ENCODE measurements at regions of chr6 and their contacts with region 1.

Region 1: DNA sequence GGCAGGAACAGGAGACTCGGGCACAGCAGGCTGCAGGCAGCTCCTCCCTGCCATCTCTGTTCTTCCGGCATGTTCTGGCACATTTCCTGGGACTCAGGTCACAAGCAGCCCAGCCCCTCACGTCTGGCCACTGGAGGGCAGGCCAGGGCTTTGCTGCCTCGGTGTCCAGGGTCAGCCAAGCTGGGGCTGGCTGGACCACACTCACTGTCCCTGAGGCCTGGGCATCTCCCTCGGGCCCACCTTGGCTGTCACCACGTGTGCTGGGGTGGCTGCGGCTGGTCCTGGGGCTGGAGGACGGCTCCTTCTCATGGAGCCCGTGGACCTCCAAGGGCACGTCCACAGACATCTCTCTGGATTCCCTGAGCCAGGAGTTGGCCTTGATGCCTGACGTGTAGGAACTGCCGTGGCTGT is 18.5 kb downstream of the FRMD1 start:
- DNase-seq: peak; percentile 43
- ATAC-seq: peak; percentile 89
- H3K4me3 ChIP-seq: no peak overlapping the region
- H3K27ac ChIP-seq: no peak overlapping the region
- H3K4me1 ChIP-seq: 0 out of 2 replicates have a peak, but pooled peaks cover 1% of the 10 kb centered on the region
- H3K27me3 ChIP-seq: no peaks in the 10 kb centered on the region; the same call in 1 of the 2 replicates
- CTCF ChIP-seq: peak; percentile 45
- POLR2A ChIP-seq: no peak
- RAD21 ChIP-seq: peak; percentile 52

Region 2: DNA sequence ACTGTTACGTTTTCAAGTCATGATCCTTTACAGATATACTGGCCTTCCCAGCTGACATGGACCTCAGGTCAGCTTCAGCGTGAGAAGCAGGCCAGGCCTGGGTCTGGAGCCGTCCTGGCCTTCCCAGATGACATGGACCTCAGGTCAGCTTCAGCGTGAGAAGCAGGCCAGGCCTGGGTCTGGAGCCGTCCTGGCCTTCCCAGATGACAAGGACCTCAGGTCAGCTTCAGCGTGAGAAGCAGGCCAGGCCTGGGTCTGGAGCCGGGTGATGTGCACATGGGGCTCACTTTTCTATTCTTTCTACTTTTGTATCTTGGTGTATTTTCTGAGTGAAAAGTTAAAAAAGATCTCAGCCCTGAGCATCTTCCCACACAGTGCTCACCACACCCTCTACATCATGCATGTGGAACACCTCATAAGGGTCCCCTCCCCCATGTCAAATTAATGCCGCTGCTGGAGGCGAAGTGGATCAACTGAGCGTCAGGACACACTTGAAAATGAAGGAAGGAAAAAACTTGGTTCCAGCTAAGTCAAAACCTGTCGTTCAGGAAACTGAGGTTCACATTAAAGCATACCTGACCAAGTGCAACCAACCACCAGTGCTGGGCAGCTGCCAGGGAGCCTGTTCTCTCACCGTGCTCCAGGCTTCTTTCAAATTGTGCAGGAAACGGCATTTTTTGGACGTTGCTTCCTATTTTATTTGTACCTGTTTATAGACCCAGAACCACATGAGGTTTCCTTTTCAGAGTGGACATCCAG is 30.9 kb before region 1 on chr6:
- CTCF ChIA-PET with region 1: no interaction called
- POLR2A ChIA-PET with region 1: no interaction called
- dilution Hi-C with region 1: no loop called
- in situ Hi-C with region 1: no loop called
- intact Hi-C with region 1: no loop called
- DNase-seq: no peak
- ATAC-seq: no peak
- H3K4me3 ChIP-seq: no peak overlapping the region
- H3K27ac ChIP-seq: no peak overlapping the region
- H3K4me1 ChIP-seq: peaks cover 12% of the 10 kb centered on the region
- H3K27me3 ChIP-seq: no peaks in the 10 kb centered on the region
- CTCF ChIP-seq: no peak
- POLR2A ChIP-seq: no peak
- RAD21 ChIP-seq: no peak

Region 3: DNA sequence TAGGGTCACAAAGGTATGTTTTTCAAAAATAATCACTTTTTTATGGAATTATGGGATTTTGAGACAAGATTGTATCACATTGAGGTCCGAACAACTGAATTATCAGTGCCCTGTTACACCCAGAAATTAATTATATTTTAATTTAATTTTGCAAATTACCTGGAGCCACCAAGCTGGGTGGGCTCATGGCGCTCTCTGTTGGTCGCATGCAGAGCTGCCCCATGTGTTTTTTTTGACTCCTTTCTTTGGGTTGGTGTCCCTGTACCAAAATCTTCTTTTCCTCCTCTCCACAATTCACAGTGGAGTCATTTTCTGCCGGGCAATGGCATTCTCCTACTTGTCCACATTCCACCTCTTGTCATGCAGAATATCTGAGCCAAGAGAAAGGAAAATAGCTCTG is 57.4 kb after region 1 on chr6:
- CTCF ChIA-PET with region 1: interaction called, 7 read pairs
- POLR2A ChIA-PET with region 1: no interaction called
- dilution Hi-C with region 1: no loop called
- in situ Hi-C with region 1: no loop called
- intact Hi-C with region 1: loop called (anchors 5 kb)
- DNase-seq: no peak
- ATAC-seq: no peak
- H3K4me3 ChIP-seq: no peak overlapping the region
- H3K27ac ChIP-seq: no peak overlapping the region
- H3K4me1 ChIP-seq: no peaks in the 10 kb centered on the region
- H3K27me3 ChIP-seq: peaks cover 3% of the 10 kb centered on the region; the same call in 1 of the 2 replicates
- CTCF ChIP-seq: peak; percentile 40
- POLR2A ChIP-seq: no peak
- RAD21 ChIP-seq: peak; percentile 32; the same call in 1 of the 2 replicates

Region 4: DNA sequence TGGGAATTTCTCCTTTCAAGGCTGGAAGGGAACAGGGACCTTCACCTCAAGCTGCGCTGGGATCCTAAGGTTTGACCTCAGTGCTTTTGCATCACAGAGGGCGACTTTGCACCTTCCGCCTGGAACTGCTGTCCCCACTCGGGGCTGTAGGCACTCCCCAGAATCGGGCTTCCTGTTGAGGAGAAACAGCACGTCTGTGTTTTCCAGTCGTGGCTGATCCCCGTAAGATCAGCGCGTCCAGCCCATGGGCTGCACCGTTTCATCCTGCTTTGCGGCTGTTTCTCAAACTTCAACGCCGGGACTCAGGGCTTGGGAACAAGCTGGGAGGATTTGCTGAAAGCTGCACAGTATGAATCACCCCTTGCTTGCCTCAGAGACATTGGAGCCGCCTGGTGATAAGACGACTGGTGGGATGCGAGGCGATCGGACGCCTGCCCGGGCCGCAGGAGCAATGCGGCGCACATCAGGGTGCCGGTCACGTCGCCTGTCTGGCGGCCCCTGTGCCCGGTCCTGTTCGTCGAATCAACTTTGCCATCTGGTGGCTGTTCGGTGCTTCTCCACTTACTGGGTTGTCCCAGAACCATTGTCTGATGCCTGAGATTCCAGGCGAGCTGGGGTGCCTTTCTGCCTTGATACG is 72.1 kb after region 1 on chr6:
- CTCF ChIA-PET with region 1: interaction called, 8 read pairs
- POLR2A ChIA-PET with region 1: no interaction called
- dilution Hi-C with region 1: no loop called
- in situ Hi-C with region 1: no loop called
- intact Hi-C with region 1: loop called (anchors 1 kb)
- DNase-seq: peak; percentile 80
- ATAC-seq: peak; percentile 85
- H3K4me3 ChIP-seq: no peak overlapping the region
- H3K27ac ChIP-seq: no peak overlapping the region
- H3K4me1 ChIP-seq: peaks cover 2% of the 10 kb centered on the region; the same call in 1 of the 2 replicates
- H3K27me3 ChIP-seq: no peaks in the 10 kb centered on the region; the same call in 1 of the 2 replicates
- CTCF ChIP-seq: peak; percentile 41
- POLR2A ChIP-seq: no peak
- RAD21 ChIP-seq: peak; percentile 49

Region 5: DNA sequence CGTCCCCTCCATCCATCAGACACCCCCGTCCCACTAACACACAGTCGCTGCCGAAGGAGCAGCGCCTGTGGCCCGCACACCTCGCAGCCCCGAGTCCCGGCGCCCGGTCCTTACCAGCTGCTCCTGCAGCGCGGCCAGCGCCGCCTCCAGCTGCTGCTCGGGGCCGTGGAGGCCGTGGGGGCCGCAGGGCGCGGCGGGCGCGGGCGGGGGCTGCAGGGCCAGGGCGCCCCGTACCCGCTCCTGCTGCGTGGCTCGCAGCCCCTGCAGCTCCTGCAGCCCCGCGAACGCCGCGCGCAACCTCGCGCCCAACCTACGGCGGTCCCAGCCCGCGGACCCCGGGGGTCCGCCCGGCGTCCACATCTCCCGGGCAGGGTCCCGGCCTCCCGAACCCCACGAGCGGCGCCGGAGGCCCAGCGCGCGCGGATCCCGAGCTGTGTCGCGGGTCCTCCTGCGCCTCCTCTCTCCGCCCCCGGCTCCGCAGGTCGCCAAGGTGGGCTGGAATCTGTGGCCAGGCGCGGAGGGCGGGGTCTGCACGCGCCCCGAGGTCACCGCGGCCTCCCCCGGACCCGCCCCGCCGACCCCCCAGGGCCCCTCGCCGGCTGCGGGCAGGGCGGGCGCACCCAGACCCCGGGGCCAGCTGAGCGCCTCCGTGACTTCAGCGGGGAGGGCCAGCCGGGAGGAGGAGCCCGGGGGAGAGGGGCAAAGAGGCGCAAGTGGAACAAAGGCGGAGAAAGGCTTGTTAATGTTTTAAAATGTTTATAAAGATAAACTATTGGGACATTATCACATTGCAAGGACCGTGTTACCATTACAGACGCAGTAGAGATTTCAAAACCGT is 259.0 kb after region 1 on chr6 and contains the start of gene DACT2:
- CTCF ChIA-PET with region 1: no interaction called
- POLR2A ChIA-PET with region 1: no interaction called
- dilution Hi-C with region 1: no loop called
- in situ Hi-C with region 1: no loop called
- intact Hi-C with region 1: no loop called
- DNase-seq: no peak
- ATAC-seq: no peak
- H3K4me3 ChIP-seq: no peak within 1 kb of the TSS
- H3K27ac ChIP-seq: no peak within 1 kb of the TSS
- H3K4me1 ChIP-seq: no peaks in the 10 kb centered on the region
- H3K27me3 ChIP-seq: no peaks in the 10 kb centered on the region
- CTCF ChIP-seq: no peak
- POLR2A ChIP-seq: no peak
- RAD21 ChIP-seq: no peak
- total RNA-seq, gene DACT2: not detected in 2 replicates

Region 6: GRCh38 chr6:168884646-168885086 is 824.1 kb after region 1 on chr6:
- CTCF ChIA-PET with region 1: interaction called, 4 read pairs
- POLR2A ChIA-PET with region 1: no interaction called
- dilution Hi-C with region 1: no loop called
- in situ Hi-C with region 1: no loop called
- intact Hi-C with region 1: loop called (anchors 10 kb)
- DNase-seq: peak; percentile 5
- ATAC-seq: peak; percentile 87
- H3K4me3 ChIP-seq: no peak overlapping the region
- H3K27ac ChIP-seq: no peak overlapping the region
- H3K4me1 ChIP-seq: no peaks in the 10 kb centered on the region
- H3K27me3 ChIP-seq: no peaks in the 10 kb centered on the region; the same call in 1 of the 2 replicates
- CTCF ChIP-seq: peak; percentile 53
- POLR2A ChIP-seq: no peak
- RAD21 ChIP-seq: peak; percentile 59